A549 (cell line): ENCODE measurements at regions of chr6 and their contacts with region 1.

Region 1: DNA sequence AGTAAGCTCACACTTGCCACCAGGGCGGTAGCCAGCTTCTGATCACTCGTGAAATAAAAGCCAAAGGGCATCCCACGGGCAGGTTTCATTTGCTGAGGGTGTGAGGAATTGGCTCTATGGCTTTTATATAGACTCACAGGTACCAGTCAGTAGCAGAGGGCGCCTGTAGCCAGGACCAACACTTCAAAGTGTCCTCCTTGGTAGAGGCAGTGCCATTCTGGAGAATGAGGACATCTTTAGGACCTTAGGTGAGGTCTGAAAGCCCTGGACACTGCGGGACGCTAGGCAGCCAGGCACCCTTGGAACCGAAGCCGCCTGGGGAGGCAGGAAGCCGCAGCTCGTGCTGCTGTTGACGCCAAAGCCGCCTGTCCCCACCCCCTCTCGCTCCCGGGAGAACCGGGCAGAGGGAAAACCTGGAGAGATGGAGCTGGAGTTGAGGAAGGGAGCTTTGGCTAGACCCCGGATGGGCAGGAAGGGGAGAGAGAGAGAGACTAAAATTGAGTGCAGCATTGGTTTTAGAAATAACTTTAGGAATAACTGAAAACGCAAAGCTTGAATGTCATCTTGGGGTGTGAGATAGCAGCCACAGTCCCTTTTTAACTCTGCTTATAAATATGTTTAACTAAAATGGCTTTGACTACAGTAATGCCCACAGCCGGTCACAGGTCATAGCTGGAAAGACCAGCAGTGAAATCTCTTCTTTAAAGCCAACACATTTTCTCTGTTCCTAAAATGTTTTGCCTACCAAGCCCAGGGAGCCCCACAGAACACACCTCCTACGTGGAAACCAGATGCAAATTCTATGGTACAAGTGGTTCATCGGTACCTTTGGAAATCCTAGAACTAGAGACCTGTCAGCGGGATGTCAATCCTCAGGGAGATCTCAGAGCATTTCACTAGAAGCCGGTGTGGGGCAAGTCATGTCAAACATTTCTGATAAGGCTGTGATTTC is 128.5 kb upstream of the CDYL start:
- DNase-seq: peak; percentile 70 to 81
- ATAC-seq: peak; percentile 93 to 95
- H3K4me3 ChIP-seq: peak overlapping the region; percentile 47
- H3K27ac ChIP-seq: peak overlapping the region; percentile 91 to 92
- H3K4me1 ChIP-seq: peaks cover 17% of the 10 kb centered on the region; the same call in 2 of the 3 replicates
- CTCF ChIP-seq: no peak
- EP300 ChIP-seq: no peak
- POLR2A ChIP-seq: peak; percentile 31; the same call in 1 of the 2 replicates
- RAD21 ChIP-seq: peak in 1 of 2 experiments; percentile 53; a peak in 4 of 5 replicates

Region 2: GRCh38 chr6:4775584-4776494 is 128.1 kb after region 1 on chr6 and contains the start of gene CDYL:
- CTCF ChIA-PET with region 1: no interaction called
- POLR2A ChIA-PET with region 1: interaction called, 13 read pairs
- DNase-seq: peak; percentile 55 to 87
- ATAC-seq: peak; percentile 88 to 92
- H3K4me3 ChIP-seq: peak within 1 kb of the TSS; percentile 72
- H3K27ac ChIP-seq: peak within 1 kb of the TSS; percentile 90 to 100
- H3K4me1 ChIP-seq: peaks cover 8% of the 10 kb centered on the region; the same call in 2 of the 3 replicates
- CTCF ChIP-seq: peak; percentile 23; the same call in 2 of the 3 replicates
- EP300 ChIP-seq: no peak
- POLR2A ChIP-seq: peak; percentile 45
- RAD21 ChIP-seq: peak in 1 of 2 experiments; percentile 56; a peak in 3 of 5 replicates
- polyA plus RNA-seq, gene CDYL: 36.7 and 42.7 TPM in 2 replicates

Region 3: DNA sequence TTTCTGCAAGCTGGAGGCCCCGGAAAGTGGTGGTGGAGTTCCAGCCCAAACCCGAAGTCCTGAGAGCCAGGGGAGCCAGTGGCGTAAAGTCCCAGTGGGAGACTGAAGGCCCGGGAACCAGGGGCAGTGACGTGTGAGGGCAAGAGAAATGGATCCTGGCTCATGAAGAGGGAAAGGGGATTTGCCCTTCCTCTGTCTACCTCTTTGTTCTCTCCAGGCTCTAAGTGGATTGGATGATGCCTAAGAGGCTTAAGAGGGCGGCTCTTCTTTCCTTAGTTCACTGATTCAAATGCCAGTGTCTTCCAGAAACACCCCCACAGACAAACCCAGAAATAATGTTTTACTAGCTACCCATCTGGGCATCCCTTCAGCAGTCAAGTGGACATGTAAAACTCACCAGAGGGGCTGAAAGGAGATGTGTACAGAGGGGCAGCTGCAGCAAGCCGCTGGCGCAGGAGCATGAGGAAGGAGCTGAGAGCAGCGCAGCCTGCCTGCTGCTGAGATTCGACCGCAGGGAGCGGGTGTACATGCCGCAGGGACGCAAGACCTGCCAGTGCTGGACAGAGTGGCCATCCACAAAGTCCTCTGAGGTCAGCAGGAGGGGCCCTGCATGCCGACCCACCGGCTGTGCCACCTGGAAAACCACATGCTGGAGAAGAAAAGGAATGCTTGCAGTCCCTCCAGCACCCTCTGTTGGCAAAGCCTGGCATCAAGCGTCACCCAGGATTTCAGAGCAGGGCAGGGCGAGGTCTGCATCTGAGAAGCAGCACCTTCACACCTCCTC is 158.1 kb after region 1 on chr6:
- CTCF ChIA-PET with region 1: no interaction called
- POLR2A ChIA-PET with region 1: no interaction called
- DNase-seq: peak; percentile 62 to 70
- ATAC-seq: peak; percentile 84 to 90
- H3K4me3 ChIP-seq: no peak overlapping the region
- H3K27ac ChIP-seq: peak overlapping the region; percentile 43 to 81; a peak in 3 of 6 replicates
- H3K4me1 ChIP-seq: peaks cover 65% of the 10 kb centered on the region
- CTCF ChIP-seq: peak; percentile 56
- EP300 ChIP-seq: no peak
- POLR2A ChIP-seq: no peak
- RAD21 ChIP-seq: peak; percentile 68 to 69